Calu3 (cell line): ENCODE measurements at regions of chr10 and their contacts with region 1.

Region 1: DNA sequence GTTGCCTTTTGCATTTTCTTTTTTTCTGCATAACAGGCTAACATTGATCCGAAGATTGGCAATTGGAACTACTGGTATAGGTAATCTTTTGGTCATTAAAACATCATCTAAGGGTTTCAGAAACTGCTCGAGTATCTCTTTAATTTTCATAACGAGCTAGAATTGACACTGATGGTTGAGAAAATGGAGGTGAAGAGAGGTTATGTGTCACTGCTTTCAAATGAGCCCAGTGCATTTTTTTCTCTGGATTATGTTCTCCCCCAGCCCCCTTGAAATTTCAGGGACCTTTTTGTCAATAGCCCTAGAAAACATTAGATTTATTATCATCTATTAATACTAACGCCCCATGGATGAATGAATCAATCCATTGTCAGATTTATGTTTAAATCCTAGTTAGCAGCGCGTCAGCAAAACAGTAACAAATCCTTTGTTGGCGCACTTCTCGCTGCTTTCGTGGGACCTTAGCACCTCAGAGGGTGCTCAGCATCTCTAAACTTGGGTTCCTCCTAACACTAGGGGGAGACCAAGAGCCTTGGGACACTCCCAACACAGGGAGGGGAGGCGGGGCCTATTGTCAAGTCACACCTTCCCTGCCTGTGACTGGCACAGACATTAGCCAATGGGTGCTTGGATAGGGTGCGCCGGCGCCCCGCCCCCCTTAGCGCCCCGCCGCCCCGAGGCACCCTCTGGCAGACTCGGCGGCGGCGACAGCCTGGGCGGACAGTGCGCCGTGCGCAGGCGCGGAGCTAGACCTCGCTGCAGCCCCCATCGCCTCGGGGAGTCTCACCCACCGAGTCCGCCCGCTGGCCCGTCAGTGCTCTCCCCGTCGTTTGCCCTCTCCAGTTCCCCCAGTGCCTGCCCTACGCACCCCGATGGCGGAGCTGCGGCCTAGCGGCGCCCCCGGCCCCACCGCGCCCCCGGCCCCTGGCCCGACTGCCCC is at the start of gene SUFU:
- DNase-seq: peak; percentile 96
- H3K4me3 Mint-ChIP-seq: no peak within 1 kb of the TSS
- H3K27ac Mint-ChIP-seq: peak within 1 kb of the TSS; percentile 63
- H3K4me1 Mint-ChIP-seq: no peaks in the 10 kb centered on the region
- H3K27me3 Mint-ChIP-seq: no peaks in the 10 kb centered on the region
- CTCF ChIP-seq: peak; percentile 49
- total RNA-seq, gene SUFU: 6.7 and 7.0 TPM in 2 replicates

Region 2: GRCh38 chr10:102583435-102584417 is 80.2 kb after region 1 on chr10:
- CTCF ChIA-PET with region 1: interaction called, 31 read pairs
- intact Hi-C with region 1: loop called (anchors 2 kb)
- DNase-seq: peak; percentile 75
- H3K4me3 Mint-ChIP-seq: no peak overlapping the region
- H3K27ac Mint-ChIP-seq: no peak overlapping the region
- H3K4me1 Mint-ChIP-seq: no peaks in the 10 kb centered on the region
- H3K27me3 Mint-ChIP-seq: no peaks in the 10 kb centered on the region
- CTCF ChIP-seq: peak; percentile 46

Region 3: GRCh38 chr10:102641880-102642735 is 138.6 kb after region 1 on chr10:
- CTCF ChIA-PET with region 1: interaction called, 4 read pairs
- intact Hi-C with region 1: loop called (anchors 10 kb)
- DNase-seq: peak; percentile 94
- H3K4me3 Mint-ChIP-seq: peak overlapping the region; percentile 90
- H3K27ac Mint-ChIP-seq: peak overlapping the region; percentile 85
- H3K4me1 Mint-ChIP-seq: peaks cover 21% of the 10 kb centered on the region
- H3K27me3 Mint-ChIP-seq: no peaks in the 10 kb centered on the region
- CTCF ChIP-seq: no peak